Lower leg skin (tissue), 4 donors: ENCODE measurements at regions of chr1 and their contacts with region 1.

Region 1: GRCh38 chr1:38026592-38027200 is 14.2 kb downstream of the UTP11 start:
- DNase-seq: no peak
- H3K4me3 ChIP-seq: no peak overlapping the region
- CTCF ChIP-seq: no peak
- POLR2A ChIP-seq: no peak

Region 2: GRCh38 chr1:38071312-38072256 is 44.9 kb after region 1 on chr1:
- intact Hi-C with region 1: no loop called
- DNase-seq: no peak
- H3K4me3 ChIP-seq: no peak overlapping the region
- CTCF ChIP-seq: no peak
- POLR2A ChIP-seq: no peak

Region 3: GRCh38 chr1:38818175-38818976 is 791.7 kb after region 1 on chr1:
- intact Hi-C with region 1: loop called (anchors 10 kb)
- DNase-seq: no peak
- H3K4me3 ChIP-seq: no peak overlapping the region
- CTCF ChIP-seq: no peak
- POLR2A ChIP-seq: no peak

Region 4: DNA sequence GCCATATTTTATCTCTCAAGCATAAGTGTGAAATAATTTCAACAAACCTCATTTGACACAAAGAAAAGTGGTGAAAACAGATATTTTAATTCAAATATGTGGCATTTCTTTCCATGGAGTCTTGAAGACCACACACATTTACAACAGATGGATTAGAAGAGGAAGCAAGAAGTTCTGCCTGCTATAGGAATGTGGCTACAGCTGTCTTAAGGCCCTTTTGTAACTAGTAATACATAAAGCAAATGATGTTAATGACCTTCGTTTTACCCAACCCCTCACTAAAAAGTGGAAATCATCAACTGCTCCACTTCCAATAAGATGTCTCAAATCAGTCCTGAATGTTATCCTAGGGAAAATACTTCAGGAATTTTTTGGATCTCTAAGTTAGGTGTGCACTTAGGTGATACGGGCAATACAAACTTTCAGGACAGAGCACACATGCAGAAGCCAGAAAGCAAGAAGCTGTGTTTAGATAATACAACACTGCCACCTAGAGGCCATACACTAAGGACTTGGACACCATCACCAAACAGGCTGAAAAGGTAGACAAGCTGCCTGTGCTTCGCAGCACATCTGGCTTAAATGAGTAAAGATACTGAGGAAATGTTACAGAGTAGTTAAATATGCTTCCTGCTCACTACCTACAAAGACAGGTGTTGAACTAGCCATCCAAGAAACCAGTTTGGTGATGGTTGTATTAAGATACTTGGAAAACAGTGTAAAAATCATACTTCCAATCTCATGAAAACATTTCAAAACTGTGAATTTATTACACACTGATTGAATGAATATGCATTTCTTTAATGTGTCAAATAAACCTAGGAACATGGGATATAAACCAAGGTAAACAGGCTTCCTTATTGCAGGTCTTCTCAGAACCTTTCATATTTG is 808.5 kb after region 1 on chr1:
- intact Hi-C with region 1: loop called (anchors 10 kb)
- DNase-seq: peak in 1 of 2 donors; percentile 61
- H3K4me3 ChIP-seq: no peak overlapping the region
- CTCF ChIP-seq: no peak
- POLR2A ChIP-seq: no peak